A673 (cell line): ENCODE measurements at regions of chr7 and their contacts with region 1.

Region 1: GRCh38 chr7:106201164-106201563 is 83.6 kb downstream of the NAMPT start:
- DNase-seq: no peak
- H3K4me3 ChIP-seq: no peak overlapping the region
- H3K27ac ChIP-seq: no peak overlapping the region
- H3K4me1 ChIP-seq: peaks cover 4% of the 10 kb centered on the region
- H3K27me3 ChIP-seq: no peaks in the 10 kb centered on the region
- CTCF ChIP-seq: no peak

Region 2: GRCh38 chr7:106225856-106226255 is 24.7 kb after region 1 on chr7:
- CTCF ChIA-PET with region 1: no interaction called
- POLR2A ChIA-PET with region 1: interaction called, 10 read pairs
- intact Hi-C with region 1: no loop called
- DNase-seq: no peak
- H3K4me3 ChIP-seq: no peak overlapping the region
- H3K27ac ChIP-seq: no peak overlapping the region
- H3K4me1 ChIP-seq: no peaks in the 10 kb centered on the region
- H3K27me3 ChIP-seq: no peaks in the 10 kb centered on the region
- CTCF ChIP-seq: no peak